RWPE1 (cell line): ENCODE measurements at regions of chr6 and their contacts with region 1.

Region 1: DNA sequence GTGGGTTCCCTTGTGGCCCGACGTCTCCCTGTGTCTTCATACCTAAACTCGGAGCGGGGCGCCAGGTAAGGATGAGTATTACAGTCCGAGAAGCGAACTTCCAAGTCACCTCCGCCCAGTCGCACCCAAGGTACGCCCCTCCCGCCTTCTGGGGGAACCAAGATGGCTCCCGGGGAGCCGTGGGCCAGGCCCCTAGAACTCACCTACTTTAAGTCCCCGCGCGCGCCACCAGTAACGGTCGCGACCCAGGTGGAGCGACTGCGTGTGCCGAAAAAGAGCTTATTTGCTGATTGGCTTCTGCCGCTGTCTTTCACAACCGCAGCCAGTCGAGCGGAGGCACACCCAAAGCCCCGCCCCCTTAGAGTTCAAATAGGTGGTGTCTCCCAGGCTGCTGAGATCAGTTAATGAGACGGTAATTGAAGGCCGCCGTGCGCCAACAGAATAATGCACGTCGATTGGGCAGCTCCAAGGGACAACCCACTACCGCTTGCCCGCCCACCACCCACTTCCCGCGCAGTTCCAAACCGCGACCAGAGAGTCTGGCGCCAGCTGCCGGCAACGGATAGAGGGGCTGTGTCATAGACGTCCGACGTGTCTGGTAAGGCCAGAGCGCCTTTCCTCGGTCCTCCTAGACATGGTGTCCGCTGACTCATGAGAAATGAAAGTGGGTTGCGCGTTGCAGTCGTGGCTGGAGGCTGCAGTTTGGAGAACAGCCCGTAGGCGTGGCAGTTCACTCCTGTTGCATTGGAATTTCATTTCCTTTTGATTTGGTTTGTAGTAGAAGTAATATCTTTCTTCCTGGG is at the start of gene MDC1:
- DNase-seq: peak; percentile 96
- H3K27ac ChIP-seq: peak within 1 kb of the TSS; percentile 98
- CTCF ChIP-seq: no peak

Region 2: GRCh38 chr6:30441171-30441570 is 276.1 kb before region 1 on chr6:
- CTCF ChIA-PET with region 1: no interaction called
- POLR2A ChIA-PET with region 1: no interaction called
- DNase-seq: peak; percentile 81
- H3K27ac ChIP-seq: no peak overlapping the region
- CTCF ChIP-seq: no peak

Region 3: DNA sequence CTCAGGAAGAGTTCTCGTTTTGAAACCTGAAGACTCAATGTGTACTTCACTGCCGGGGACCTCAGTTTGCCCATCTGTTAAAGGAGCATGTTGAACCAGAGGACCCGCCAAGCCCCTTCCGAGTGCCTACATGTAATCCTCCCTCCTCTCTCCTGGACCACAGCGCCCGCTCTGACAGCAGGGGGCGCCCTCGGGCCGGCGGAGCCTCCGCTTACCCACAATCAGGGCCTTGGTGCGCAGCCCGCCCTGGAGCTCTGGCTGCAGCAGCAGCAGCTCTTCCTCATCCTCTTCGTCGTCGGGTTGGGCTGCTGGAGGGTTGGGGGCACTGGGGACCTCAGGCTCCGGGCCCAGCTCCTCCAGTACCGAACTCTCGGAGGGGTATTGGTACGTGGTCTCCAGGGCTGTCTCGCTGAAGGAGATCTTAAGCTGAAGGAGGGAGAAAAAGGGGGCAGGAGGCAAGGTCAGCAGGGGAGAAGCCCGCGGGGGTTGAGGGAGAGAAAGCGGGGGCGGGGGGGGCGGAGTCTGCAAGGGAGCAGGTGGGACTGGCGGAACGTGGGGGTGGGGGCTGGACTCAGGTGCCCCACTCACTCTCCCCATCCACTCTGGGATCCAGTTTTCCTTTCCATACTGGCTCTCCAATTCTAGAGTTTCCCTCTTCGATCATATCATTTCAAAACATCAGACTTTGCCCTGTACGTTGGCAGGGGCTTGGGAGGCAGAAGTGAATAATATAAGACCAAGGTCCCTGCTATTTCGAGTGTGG is 38.1 kb before region 1 on chr6:
- CTCF ChIA-PET with region 1: interaction called, 31 read pairs
- POLR2A ChIA-PET with region 1: no interaction called
- DNase-seq: peak; percentile 59
- H3K27ac ChIP-seq: peak overlapping the region; percentile 97
- CTCF ChIP-seq: peak; percentile 92

Region 4: DNA sequence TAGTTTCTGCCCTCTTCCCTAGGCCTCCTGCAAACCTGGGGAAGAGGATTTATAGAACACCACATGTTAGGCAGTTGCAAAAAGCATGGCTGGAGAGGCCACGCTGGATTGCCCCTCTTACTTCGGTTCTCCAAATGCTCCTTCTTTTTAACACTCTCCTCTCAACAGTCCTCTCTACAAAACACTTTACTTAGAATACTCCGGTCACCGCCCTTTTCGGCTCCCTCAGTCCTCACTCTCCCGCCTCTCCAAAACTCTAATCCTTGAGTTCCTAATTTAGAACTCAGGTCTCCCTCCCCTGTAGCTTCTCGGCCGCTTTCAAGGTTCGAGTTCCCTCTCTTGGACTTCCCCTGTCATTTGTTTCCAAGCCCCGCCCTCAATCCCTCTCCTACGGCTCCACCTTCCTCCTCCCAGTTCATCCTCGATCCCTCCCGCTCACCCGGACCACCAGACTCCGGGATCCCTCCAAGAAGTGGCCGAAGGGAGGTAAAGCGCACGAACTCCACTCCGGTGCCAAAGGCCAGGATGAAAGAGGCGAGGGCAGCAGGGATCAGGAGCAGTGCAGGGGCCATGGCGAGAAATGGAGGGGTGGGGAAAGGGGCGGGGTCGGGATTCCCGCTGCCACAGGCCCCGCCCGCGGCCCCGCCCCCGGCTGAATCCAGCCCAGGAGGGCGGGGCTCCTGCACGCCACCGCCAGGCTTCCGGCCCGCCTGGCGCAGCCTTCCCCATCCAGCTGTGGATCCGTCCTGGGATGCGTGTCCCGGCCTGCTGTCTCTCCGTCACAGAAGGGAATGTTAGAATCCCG is 26.6 kb before region 1 on chr6 and contains the start of gene NRM:
- CTCF ChIA-PET with region 1: interaction called, 12 read pairs
- POLR2A ChIA-PET with region 1: interaction called, 12 read pairs
- DNase-seq: peak; percentile 89
- H3K27ac ChIP-seq: peak within 1 kb of the TSS; percentile 97
- CTCF ChIP-seq: no peak

Region 5: GRCh38 chr6:30742316-30743098 is 25.3 kb after region 1 on chr6 and contains the start of gene FLOT1:
- CTCF ChIA-PET with region 1: no interaction called
- POLR2A ChIA-PET with region 1: no interaction called
- DNase-seq: peak; percentile 95
- H3K27ac ChIP-seq: peak within 1 kb of the TSS; percentile 94
- CTCF ChIP-seq: no peak